ENCODE measurements at regions of chr12 and their contacts with region 1.

Region 1: GRCh38 chr12:54053751-54054741 is at the start of gene HOXC4:
- DNase-seq: peak; percentile 87
- H3K4me3 ChIP-seq: peak within 1 kb of the TSS; percentile 85
- H3K27ac ChIP-seq: peak within 1 kb of the TSS; percentile 83
- H3K4me1 ChIP-seq: peaks cover 40% of the 10 kb centered on the region
- CTCF ChIP-seq: no peak
- total RNA-seq, gene HOXC4: 6.2 and 7.1 TPM in 2 replicates

Region 2: GRCh38 chr12:53956251-53956887 is 97.7 kb before region 1 on chr12:
- CTCF ChIA-PET with region 1: no interaction called
- POLR2A ChIA-PET with region 1: no interaction called
- intact Hi-C with region 1: no loop called
- DNase-seq: no peak
- H3K4me3 ChIP-seq: no peak overlapping the region
- H3K27ac ChIP-seq: no peak overlapping the region
- H3K4me1 ChIP-seq: peaks cover 6% of the 10 kb centered on the region
- CTCF ChIP-seq: no peak

Region 3: GRCh38 chr12:54017878-54018467 is 36.1 kb before region 1 on chr12:
- CTCF ChIA-PET with region 1: no interaction called
- POLR2A ChIA-PET with region 1: interaction called, 24 read pairs
- intact Hi-C with region 1: loop called (anchors 1 kb)
- DNase-seq: peak; percentile 98
- H3K4me3 ChIP-seq: peak overlapping the region; percentile 77
- H3K27ac ChIP-seq: peak overlapping the region; percentile 83
- H3K4me1 ChIP-seq: peaks cover 49% of the 10 kb centered on the region
- CTCF ChIP-seq: no peak

Region 4: GRCh38 chr12:54042970-54043853 is 10.8 kb before region 1 on chr12:
- CTCF ChIA-PET with region 1: interaction called, 6 read pairs
- POLR2A ChIA-PET with region 1: interaction called, 32 read pairs
- intact Hi-C with region 1: no loop called
- DNase-seq: no peak
- H3K4me3 ChIP-seq: peak overlapping the region; percentile 5
- H3K27ac ChIP-seq: peak overlapping the region; percentile 21
- H3K4me1 ChIP-seq: peaks cover 32% of the 10 kb centered on the region
- CTCF ChIP-seq: no peak

Region 5: DNA sequence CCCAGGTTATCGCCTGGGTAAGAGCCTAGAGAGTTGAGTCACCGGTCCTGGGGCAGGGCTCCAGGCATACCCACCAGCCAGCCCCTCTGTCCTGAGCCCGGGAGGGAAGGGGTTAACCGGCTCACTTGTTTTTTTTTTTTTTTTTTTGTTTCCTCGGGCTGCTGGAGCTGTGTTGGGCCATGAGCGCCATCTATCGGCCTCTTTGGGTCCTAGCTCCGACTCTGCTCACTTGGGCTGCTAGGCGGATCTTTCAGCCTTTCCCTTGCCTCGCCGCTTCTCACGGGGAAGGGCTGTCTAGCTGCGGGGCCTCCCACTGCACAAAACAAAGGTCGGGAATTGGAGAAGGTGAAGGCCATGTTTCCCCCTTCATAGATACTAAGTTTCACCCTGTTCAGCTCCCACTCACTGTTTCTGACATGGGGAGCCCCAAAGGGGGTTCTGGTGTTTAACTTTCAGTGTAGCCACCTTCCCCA is 137.5 kb after region 1 on chr12:
- CTCF ChIA-PET with region 1: interaction called, 3 read pairs
- POLR2A ChIA-PET with region 1: interaction called, 18 read pairs
- intact Hi-C with region 1: no loop called
- DNase-seq: peak; percentile 89
- H3K4me3 ChIP-seq: no peak overlapping the region
- H3K27ac ChIP-seq: no peak overlapping the region
- H3K4me1 ChIP-seq: peaks cover 54% of the 10 kb centered on the region
- CTCF ChIP-seq: peak; percentile 82

Region 6: DNA sequence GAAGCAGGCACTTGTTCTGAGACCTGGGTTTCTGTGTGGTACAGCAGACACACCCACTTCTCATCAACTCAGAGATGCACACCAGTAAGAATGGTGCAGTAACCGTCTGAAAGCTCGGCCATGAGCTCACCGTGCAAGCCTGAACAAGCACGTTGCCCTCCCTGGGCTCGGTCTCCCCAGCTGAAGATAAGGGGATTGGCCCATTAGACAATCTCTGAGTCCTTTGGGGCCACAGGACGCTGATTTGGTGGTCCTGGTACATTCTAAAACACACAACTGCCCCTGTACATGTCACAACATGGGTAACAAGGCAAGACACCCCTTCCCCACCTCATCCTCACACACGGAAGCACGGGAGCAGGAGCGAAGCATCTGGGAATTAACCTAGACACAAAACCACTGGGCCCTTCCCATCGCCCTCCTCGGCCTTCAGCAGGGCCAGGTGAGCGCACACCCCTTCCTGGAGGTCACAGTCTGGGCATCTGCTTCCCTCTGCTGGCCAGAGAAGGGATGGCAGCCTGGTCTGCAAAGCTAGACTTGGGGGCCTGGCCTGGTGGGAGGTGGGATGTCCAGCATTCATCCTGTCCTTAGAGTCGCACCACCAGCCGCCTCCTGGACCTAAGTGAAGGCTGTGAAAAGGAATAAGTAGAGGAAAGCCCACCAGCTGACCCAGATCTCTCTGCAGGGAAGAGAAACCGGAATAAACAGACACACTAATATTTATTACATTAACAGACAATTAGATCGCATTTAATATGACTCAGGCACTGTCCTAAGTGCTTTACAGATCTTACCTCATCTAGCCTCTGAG is 153.6 kb after region 1 on chr12:
- CTCF ChIA-PET with region 1: interaction called, 14 read pairs
- POLR2A ChIA-PET with region 1: no interaction called
- intact Hi-C with region 1: no loop called
- DNase-seq: peak; percentile 84
- H3K4me3 ChIP-seq: no peak overlapping the region
- H3K27ac ChIP-seq: no peak overlapping the region
- H3K4me1 ChIP-seq: peaks cover 14% of the 10 kb centered on the region
- CTCF ChIP-seq: peak; percentile 96

Region 7: GRCh38 chr12:54214553-54215406 is 160.7 kb after region 1 on chr12:
- CTCF ChIA-PET with region 1: interaction called, 3 read pairs
- POLR2A ChIA-PET with region 1: interaction called, 4 read pairs
- intact Hi-C with region 1: loop called (anchors 1 kb)
- DNase-seq: peak; percentile 97
- H3K4me3 ChIP-seq: peak overlapping the region; percentile 55
- H3K27ac ChIP-seq: peak overlapping the region; percentile 89
- H3K4me1 ChIP-seq: peaks cover 63% of the 10 kb centered on the region
- CTCF ChIP-seq: peak; percentile 100

Measured in OCI-LY7 (cell line).